Heart left ventricle (tissue), 16 donors: ENCODE measurements at regions of chr15 and their contacts with region 1.

Region 1: GRCh38 chr15:51829360-51830275 is at the start of gene TMOD3:
- DNase-seq: peak; percentile 92 to 97 (median 94)
- ATAC-seq: peak; percentile 97 to 98 (median 98)
- H3K4me3 ChIP-seq: peak within 1 kb of the TSS; percentile 74 to 99 (median 90)
- H3K27ac ChIP-seq: peak within 1 kb of the TSS; percentile 83 to 98 (median 93)
- H3K4me1 ChIP-seq: peaks cover 6 to 47% (median 25%) of the 10 kb centered on the region in 12 donors
- H3K27me3 ChIP-seq: no peaks in the 10 kb centered on the region
- CTCF ChIP-seq: peak in 1 of 12 donors; percentile 30
- POLR2A ChIP-seq: peak in 1 of 2 donors; percentile 93
- total RNA-seq, gene TMOD3: 12.1 to 34.8 (median 21.4) TPM

Region 2: GRCh38 chr15:51708013-51708412 is 121.6 kb before region 1 on chr15:
- intact Hi-C with region 1: no loop called
- DNase-seq: no peak
- ATAC-seq: peak in 2 of 4 donors; percentile 10 to 32
- H3K4me3 ChIP-seq: peak overlapping the region in 1 of 12 donors; percentile 24
- H3K27ac ChIP-seq: peak overlapping the region in 6 of 12 donors; percentile 5 to 46 (median 34)
- H3K4me1 ChIP-seq: peaks cover 0 to 12% (median 0%) of the 10 kb centered on the region in 12 donors
- H3K27me3 ChIP-seq: no peaks in the 10 kb centered on the region
- CTCF ChIP-seq: no peak
- POLR2A ChIP-seq: no peak

Region 3: GRCh38 chr15:51874751-51875528 is 45.3 kb after region 1 on chr15:
- intact Hi-C with region 1: loop called in 4 of 10 experiments (anchors 5 to 10 kb)
- DNase-seq: no peak
- ATAC-seq: peak; percentile 29 to 89 (median 78)
- H3K4me3 ChIP-seq: no peak overlapping the region
- H3K27ac ChIP-seq: peak overlapping the region in 9 of 12 donors; percentile 26 to 74 (median 39)
- H3K4me1 ChIP-seq: peaks cover 0 to 37% (median 25%) of the 10 kb centered on the region in 12 donors
- H3K27me3 ChIP-seq: no peaks in the 10 kb centered on the region
- CTCF ChIP-seq: no peak
- POLR2A ChIP-seq: no peak

Region 4: GRCh38 chr15:51888593-51889195 is 59.1 kb after region 1 on chr15:
- intact Hi-C with region 1: loop called in 2 of 10 experiments (anchors 10 kb)
- DNase-seq: no peak
- ATAC-seq: no peak
- H3K4me3 ChIP-seq: no peak overlapping the region
- H3K27ac ChIP-seq: no peak overlapping the region
- H3K4me1 ChIP-seq: peaks cover 0 to 25% (median 10%) of the 10 kb centered on the region in 12 donors
- H3K27me3 ChIP-seq: no peaks in the 10 kb centered on the region
- CTCF ChIP-seq: peak; percentile 65 to 86 (median 74)
- POLR2A ChIP-seq: no peak